CD4-positive, alpha-beta memory T cell (primary cell): ENCODE measurements at regions of chr5 and their contacts with region 1.

Region 1: DNA sequence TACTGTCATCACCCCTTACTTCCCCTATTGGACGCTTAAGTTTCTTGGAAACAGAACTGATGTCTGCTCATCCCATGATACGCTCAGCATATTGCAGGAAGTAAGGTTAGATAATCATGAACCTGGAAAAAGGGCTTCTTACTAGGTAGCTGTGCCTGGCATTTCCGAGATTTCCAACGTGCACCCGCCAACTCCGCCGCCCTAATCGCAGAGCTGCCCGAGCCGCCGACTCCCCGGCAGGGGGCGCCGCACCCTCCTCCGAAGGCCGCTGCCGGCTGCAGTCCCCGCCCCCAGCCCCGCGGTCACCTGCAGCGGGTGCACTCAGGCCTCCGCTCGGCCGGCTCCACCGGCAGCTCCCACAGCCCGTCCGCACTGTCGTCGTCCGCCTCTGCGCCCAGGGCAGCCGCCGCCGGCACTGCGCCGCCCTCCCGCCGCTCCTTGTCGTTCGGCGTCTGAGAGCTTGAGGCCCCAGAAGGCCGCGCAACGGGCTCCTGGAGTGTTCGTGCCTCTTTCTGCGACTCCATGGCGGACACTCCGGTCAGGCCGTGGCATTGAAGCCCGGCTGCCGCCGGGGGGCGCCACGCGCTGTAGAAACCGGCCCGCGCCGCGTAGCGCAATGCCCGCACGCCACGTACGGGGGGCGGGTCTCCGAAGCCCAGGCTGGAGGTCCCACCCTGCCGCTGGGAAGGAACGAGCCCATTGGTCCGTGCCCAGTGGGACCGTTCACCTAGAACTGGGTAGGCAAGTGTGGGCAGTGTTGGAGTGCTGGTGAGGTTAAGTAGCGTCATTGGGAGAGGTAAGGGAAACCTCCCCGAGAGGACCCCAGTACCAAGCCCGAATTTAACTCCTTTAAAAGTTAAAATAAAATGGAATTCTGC is at the start of gene DTWD2:
- DNase-seq: peak; percentile 86 to 98 (median 94)
- H3K4me3 ChIP-seq: peak within 1 kb of the TSS; percentile 57 to 70
- H3K4me3 Mint-ChIP-seq: peak within 1 kb of the TSS; percentile 80 to 87 (median 84)
- H3K27ac ChIP-seq: peak within 1 kb of the TSS; percentile 66
- H3K27ac Mint-ChIP-seq: peak within 1 kb of the TSS; percentile 66 to 90 (median 80)
- H3K4me1 ChIP-seq: peaks cover 16% of the 10 kb centered on the region
- H3K4me1 Mint-ChIP-seq: peaks cover 9 to 20% (median 11%) of the 10 kb centered on the region in 4 donors
- H3K27me3 ChIP-seq: no peaks in the 10 kb centered on the region
- H3K27me3 Mint-ChIP-seq: no peaks in the 10 kb centered on the region
- total RNA-seq, gene DTWD2: 3.5 TPM

Region 2: GRCh38 chr5:119022017-119022745 is 34.0 kb after region 1 on chr5:
- CTCF ChIA-PET with region 1: interaction called, 5 read pairs
- POLR2A ChIA-PET with region 1: no interaction called
- intact Hi-C with region 1: loop called (anchors 2 kb)
- DNase-seq: peak in 4 of 5 donors; percentile 42 to 47 (median 46)
- H3K4me3 ChIP-seq: no peak overlapping the region
- H3K4me3 Mint-ChIP-seq: no peak overlapping the region
- H3K27ac ChIP-seq: no peak overlapping the region
- H3K27ac Mint-ChIP-seq: peak overlapping the region in 1 of 7 donors; percentile 65
- H3K4me1 ChIP-seq: no peaks in the 10 kb centered on the region
- H3K4me1 Mint-ChIP-seq: no peaks in the 10 kb centered on the region
- H3K27me3 ChIP-seq: no peaks in the 10 kb centered on the region
- H3K27me3 Mint-ChIP-seq: no peaks in the 10 kb centered on the region

Region 3: DNA sequence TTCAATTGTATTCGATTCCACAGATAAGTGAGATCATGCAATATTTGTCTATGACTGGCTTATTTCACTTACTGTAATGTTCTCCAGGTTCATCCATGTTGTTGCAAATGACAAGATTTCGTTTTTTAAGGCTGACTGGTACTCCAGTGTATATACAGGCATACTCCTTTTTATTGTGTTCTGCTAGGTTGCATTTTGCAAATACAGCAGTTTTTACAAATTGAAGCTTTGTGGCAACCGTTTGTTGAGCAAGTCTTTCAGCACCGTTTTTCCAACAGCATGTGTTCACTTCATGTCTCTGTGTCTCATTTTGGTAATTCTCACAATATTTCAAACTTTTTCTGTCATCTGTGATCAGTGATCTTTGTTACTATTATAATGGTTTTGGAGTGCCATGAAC is 165.4 kb after region 1 on chr5:
- CTCF ChIA-PET with region 1: no interaction called
- POLR2A ChIA-PET with region 1: no interaction called
- intact Hi-C with region 1: no loop called
- DNase-seq: no peak
- H3K4me3 ChIP-seq: no peak overlapping the region
- H3K4me3 Mint-ChIP-seq: no peak overlapping the region
- H3K27ac ChIP-seq: no peak overlapping the region
- H3K27ac Mint-ChIP-seq: no peak overlapping the region
- H3K4me1 ChIP-seq: no peaks in the 10 kb centered on the region
- H3K4me1 Mint-ChIP-seq: no peaks in the 10 kb centered on the region
- H3K27me3 ChIP-seq: no peaks in the 10 kb centered on the region
- H3K27me3 Mint-ChIP-seq: no peaks in the 10 kb centered on the region

Region 4: DNA sequence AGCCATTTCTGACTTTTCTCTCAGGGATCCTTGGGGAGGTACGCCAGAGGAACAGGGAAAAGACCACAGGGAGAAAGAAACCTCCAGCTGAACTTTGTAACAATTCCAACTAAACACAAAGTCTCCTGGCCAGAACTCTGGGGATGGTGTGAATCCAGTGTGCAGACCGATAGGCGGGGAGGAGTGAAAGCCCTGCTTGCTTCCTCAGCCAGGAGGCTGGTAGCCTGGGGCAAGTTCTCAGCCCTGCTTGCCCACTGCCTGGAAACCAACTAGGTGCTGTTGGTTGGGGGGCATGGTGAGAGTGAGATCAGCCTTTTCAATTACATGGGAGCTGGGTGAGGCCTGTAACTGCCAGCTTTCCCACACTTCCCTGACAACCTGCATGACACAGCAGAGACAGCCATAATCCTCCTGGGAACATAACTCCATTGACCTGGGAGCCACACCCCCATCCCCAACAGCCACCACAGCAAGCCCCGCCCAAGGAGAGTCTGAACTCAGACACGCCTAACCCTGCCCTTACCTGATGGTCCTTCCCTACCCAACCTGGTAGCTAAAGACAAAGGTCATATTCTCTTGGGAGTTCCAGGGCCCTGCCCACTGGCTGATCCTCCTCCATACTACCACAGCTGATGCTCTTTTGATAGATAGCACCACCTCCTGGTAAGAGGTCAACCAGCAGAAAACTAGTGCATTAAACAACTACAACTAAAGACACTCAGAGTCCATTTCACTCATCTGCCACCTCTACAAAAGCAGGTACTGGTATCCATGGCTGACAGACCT is 267.5 kb after region 1 on chr5:
- CTCF ChIA-PET with region 1: interaction called, 16 read pairs
- POLR2A ChIA-PET with region 1: no interaction called
- intact Hi-C with region 1: no loop called
- DNase-seq: no peak
- H3K4me3 ChIP-seq: no peak overlapping the region
- H3K4me3 Mint-ChIP-seq: no peak overlapping the region
- H3K27ac ChIP-seq: no peak overlapping the region
- H3K27ac Mint-ChIP-seq: peak overlapping the region in 1 of 7 donors; percentile 46
- H3K4me1 ChIP-seq: no peaks in the 10 kb centered on the region
- H3K4me1 Mint-ChIP-seq: peaks cover 0 to 5% (median 2%) of the 10 kb centered on the region in 4 donors
- H3K27me3 ChIP-seq: no peaks in the 10 kb centered on the region
- H3K27me3 Mint-ChIP-seq: no peaks in the 10 kb centered on the region

Region 5: GRCh38 chr5:119302916-119303897 is 315.0 kb after region 1 on chr5:
- CTCF ChIA-PET with region 1: interaction called, 10 read pairs
- POLR2A ChIA-PET with region 1: interaction called, 4 read pairs
- intact Hi-C with region 1: no loop called
- DNase-seq: no peak
- H3K4me3 ChIP-seq: peak overlapping the region; percentile 13 to 17
- H3K4me3 Mint-ChIP-seq: peak overlapping the region; percentile 17 to 96 (median 74)
- H3K27ac ChIP-seq: peak overlapping the region; percentile 43
- H3K27ac Mint-ChIP-seq: peak overlapping the region; percentile 80 to 99 (median 94)
- H3K4me1 ChIP-seq: peaks cover 83% of the 10 kb centered on the region
- H3K4me1 Mint-ChIP-seq: peaks cover 64 to 97% (median 79%) of the 10 kb centered on the region in 4 donors
- H3K27me3 ChIP-seq: no peaks in the 10 kb centered on the region
- H3K27me3 Mint-ChIP-seq: no peaks in the 10 kb centered on the region

Region 6: DNA sequence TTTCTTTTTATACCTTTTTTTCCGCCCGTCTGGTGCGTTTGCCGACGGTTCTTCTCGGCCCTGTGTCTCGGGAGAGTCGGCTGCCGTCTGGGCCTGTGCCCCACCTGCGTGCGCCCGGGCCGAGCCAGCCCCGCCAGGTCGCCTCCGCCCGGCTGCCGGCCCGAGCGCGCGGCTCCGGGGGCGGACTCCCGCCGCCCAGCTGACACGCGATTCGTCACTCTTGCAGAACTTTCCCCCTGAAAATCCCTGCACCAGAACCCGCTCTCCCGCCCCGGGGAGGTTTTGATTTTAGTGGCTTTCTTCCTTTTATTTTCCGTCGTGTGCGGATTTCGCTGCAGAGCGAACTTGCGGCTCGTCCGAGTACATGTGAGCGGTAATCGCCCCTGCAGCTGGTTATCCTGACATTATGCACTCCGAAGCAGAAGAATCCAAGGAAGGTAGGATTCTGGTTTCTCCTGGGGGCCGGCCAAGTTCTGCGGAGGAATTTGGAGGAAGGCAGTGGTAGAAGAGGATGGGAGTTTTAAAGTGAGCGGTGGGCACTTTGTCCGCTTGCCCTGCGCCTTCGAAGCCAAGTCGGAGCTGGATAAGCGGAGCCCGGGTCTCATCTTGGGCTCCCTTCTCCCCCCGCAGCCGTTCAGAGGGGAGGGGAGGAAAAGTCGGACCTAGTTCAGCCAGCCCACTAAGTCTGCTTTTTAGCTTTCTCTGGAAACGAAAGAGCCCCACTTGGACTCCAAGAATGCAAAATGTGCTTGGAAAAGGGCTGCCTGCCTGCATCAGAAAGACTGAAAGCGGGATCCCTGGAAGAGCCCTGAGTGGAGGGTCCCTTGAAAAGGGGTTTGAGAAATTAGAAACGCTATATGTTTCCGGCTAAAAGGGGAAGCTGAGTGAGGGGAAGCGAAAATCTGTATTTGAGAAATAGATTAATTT is 367.7 kb after region 1 on chr5 and contains the start of gene TNFAIP8:
- CTCF ChIA-PET with region 1: interaction called, 11 read pairs
- POLR2A ChIA-PET with region 1: interaction called, 3 read pairs
- intact Hi-C with region 1: no loop called
- DNase-seq: peak in 2 of 5 donors; percentile 12 to 75
- H3K4me3 ChIP-seq: peak within 1 kb of the TSS; percentile 51 to 55
- H3K4me3 Mint-ChIP-seq: peak within 1 kb of the TSS; percentile 82 to 97 (median 90)
- H3K27ac ChIP-seq: peak within 1 kb of the TSS; percentile 78
- H3K27ac Mint-ChIP-seq: peak within 1 kb of the TSS; percentile 86 to 97 (median 93)
- H3K4me1 ChIP-seq: peaks cover 93% of the 10 kb centered on the region
- H3K4me1 Mint-ChIP-seq: peaks cover 75 to 95% (median 86%) of the 10 kb centered on the region in 4 donors
- H3K27me3 ChIP-seq: no peaks in the 10 kb centered on the region
- H3K27me3 Mint-ChIP-seq: no peaks in the 10 kb centered on the region
- total RNA-seq, gene TNFAIP8: 167 to 176 TPM

Region 7: DNA sequence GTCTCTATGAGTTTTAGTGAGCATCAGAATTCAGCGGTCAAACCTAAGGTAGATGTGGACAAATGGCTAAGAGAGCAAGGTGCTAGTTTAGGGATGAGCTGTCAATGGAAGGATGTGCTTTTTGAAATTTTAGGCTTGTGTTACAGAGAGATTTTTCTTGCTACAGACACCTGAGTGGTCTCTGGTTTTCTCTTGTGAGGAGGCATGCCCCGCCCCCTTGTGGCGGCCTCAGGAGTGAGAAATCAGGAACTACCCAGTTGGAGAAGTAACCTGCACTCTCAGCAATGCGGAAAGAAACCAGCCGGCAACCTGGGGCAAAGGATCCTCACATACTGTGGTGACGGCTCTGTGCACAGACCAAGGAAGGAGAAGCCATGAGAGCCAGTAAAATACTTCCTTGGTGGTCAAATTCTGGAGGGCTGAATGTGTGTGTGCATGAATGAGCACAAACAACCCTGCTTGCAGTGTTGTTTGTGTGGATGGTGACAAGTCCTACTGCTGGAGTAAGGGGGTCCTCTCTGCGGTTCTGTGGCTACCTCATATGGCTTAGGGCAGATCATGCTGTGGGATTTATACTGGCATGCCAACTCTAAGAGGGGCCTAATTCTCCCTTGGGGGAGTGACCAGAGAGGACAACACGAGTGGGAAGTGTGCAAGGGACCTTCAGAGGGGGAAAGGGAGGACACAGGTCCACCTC is 447.4 kb after region 1 on chr5:
- CTCF ChIA-PET with region 1: interaction called, 50 read pairs
- POLR2A ChIA-PET with region 1: interaction called, 5 read pairs
- intact Hi-C with region 1: loop called (anchors 1 kb)
- DNase-seq: peak; percentile 61 to 73 (median 64)
- H3K4me3 ChIP-seq: no peak overlapping the region
- H3K4me3 Mint-ChIP-seq: peak overlapping the region in 1 of 8 donors; percentile 18
- H3K27ac ChIP-seq: no peak overlapping the region
- H3K27ac Mint-ChIP-seq: no peak overlapping the region
- H3K4me1 ChIP-seq: no peaks in the 10 kb centered on the region
- H3K4me1 Mint-ChIP-seq: peaks cover 3 to 8% (median 8%) of the 10 kb centered on the region in 4 donors
- H3K27me3 ChIP-seq: no peaks in the 10 kb centered on the region
- H3K27me3 Mint-ChIP-seq: peaks cover 25 to 37% of the 10 kb centered on the region in 2 donors